ENCODE measurements at regions of chr3 and their contacts with region 1.

Region 1: DNA sequence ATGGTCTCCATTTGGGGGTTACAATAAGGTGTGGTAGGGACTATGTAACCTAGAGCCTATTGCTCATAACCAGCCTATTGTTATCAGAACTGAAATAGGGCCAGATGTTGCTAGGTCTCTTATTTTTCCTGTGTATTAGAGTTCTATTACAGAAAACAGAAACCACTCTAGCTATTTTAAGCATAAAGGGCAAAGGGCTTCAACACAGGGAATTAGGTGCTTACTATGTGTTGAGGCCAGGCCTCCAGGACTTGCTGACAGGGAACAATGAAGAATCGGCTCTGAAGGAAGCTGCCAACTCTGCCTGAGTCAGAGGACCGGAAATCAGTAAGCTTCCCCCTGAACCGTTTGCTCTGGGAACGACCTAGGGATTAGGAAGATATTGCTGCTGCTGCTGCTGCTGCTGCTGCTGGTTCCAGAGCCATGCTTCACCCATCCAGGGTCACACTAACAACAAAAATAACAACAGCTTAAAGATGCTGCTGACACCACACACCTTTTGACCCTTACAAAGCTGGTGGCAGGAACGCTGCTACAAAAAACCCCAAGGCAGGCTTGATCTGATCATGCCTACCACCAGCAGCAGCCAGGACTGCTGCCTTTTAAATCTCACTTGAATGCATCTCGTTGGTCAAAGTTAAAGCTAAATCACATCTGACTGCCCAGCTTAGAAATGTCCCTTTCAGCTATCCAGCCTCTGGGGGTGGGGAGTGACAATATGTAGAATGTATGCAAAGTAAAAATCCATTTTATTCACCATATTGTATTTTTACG is 276.9 kb upstream of the IL12A start:
- DNase-seq: peak; percentile 99
- H3K4me3 ChIP-seq: no peak overlapping the region
- H3K27ac ChIP-seq: peak overlapping the region; percentile 84
- H3K4me1 ChIP-seq: peaks cover 7% of the 10 kb centered on the region
- H3K27me3 ChIP-seq: peaks cover 0 to 3% of the 10 kb centered on the region in 2 experiments
- CTCF ChIP-seq: no peak
- POLR2A ChIP-seq: peak; percentile 65

Region 2: DNA sequence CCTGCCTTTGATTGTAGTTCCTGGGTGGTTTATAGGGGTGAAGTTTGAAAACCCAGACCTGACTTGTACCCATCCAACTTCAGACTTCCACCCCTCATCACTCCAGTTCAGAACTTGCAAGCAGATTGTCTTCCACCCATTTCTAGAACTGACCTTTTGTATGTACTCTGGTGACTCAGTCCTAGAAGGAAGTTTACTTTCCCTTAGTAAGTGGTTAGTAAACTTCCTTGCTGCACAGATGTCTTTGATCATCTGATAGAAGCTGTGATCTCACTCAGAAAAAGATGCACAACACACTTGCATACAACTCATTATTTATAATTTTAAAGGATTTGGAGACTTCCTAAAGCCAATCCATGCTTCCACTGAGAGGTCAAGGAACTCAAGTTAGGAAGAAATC is 541.9 kb before region 1 on chr3:
- CTCF ChIA-PET with region 1: no interaction called
- POLR2A ChIA-PET with region 1: no interaction called
- dilution Hi-C with region 1: no loop called
- intact Hi-C with region 1: loop called (anchors 5 kb)
- DNase-seq: peak; percentile 82
- H3K4me3 ChIP-seq: no peak overlapping the region
- H3K27ac ChIP-seq: peak overlapping the region; percentile 87
- H3K4me1 ChIP-seq: peaks cover 32% of the 10 kb centered on the region
- H3K27me3 ChIP-seq: no peaks in the 10 kb centered on the region
- CTCF ChIP-seq: no peak
- POLR2A ChIP-seq: peak; percentile 71

Region 3: DNA sequence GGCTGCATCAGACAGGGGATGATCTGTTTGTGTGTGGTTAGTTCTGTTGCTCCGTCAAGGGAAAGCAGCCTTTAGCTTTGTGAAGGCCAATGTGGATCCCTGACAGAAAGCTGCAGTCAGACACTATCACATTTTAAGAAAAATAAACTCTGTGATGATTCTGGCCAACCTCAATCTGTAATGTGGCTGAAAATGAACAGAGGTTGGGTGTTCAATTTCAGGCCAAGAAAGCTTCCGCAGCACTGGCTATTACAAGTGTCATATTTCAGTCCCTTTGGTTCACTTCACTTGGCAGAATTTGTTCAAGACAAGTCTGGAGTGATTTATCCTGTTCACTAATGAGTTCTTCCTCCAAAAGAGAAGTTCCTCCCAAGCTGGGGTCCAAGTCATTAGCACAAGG is 294.9 kb before region 1 on chr3:
- CTCF ChIA-PET with region 1: no interaction called
- POLR2A ChIA-PET with region 1: no interaction called
- dilution Hi-C with region 1: no loop called
- intact Hi-C with region 1: no loop called
- DNase-seq: no peak
- H3K4me3 ChIP-seq: no peak overlapping the region
- H3K27ac ChIP-seq: no peak overlapping the region
- H3K4me1 ChIP-seq: no peaks in the 10 kb centered on the region
- H3K27me3 ChIP-seq: no peaks in the 10 kb centered on the region
- CTCF ChIP-seq: no peak
- POLR2A ChIP-seq: no peak

Region 4: DNA sequence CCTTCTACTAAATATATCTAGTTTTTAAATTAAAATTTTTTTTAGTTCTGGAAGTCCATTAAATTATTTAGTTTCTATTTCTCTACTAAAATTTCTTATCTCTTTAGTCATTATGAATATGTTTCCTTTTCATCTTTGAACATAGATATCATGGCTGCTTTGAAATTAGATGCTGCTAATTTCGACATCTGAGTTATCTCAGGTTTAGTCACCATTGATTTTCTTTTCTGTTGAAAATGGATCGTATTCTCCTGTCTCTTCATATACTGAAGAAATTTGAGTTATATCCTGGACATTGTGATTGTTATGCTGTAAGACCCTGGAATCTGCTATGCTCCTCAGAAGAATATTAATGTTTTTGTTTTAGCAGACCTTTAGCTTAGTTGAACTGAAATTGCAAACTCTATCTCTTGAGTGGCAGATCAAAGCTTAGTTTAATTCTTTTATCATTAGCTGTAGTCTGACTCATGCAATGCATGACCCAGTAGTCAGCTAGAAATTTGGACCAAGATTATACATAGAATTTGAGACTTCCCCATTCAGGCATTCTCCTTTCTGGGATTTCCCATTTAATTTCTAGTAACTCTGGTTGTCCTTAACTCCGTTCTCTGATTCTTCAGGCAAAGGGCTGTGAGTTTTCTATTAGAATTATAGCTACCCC is 162.9 kb before region 1 on chr3:
- CTCF ChIA-PET with region 1: no interaction called
- POLR2A ChIA-PET with region 1: no interaction called
- dilution Hi-C with region 1: no loop called
- intact Hi-C with region 1: no loop called
- DNase-seq: no peak
- H3K4me3 ChIP-seq: no peak overlapping the region
- H3K27ac ChIP-seq: no peak overlapping the region
- H3K4me1 ChIP-seq: no peaks in the 10 kb centered on the region
- H3K27me3 ChIP-seq: no peaks in the 10 kb centered on the region
- CTCF ChIP-seq: no peak
- POLR2A ChIP-seq: no peak

Region 5: DNA sequence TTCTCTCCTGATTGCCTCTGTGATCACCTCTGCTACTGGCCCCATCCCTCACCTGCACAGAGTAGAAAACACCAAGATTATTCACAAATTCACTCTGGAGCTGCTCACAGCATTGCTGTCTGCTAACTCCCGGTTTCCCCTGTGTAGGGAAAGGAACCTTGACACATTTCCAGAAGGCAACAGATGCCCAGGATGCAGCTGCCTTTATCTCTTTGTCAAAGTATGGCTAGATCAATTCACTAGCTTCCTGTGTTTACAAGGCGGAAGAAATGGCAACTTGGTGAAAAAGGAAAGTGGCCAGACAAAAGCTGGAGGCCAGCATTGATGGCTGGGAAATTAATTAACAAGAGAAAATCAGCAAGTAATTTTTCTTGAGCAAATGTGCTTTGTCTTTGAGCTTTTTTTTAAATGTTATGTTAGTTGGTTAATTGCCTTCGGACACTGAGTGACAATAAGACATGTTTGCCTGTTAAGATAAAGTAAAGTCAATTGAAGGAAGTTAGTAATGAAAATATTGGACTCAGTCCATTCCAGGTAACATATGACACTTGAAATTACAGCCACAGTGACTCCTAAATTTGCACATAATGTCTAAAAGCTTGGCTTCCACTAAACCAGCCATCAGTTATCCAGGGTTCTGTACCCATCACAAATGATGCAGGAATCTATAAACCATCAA is 117.7 kb before region 1 on chr3:
- CTCF ChIA-PET with region 1: interaction called, 4 read pairs
- POLR2A ChIA-PET with region 1: no interaction called
- dilution Hi-C with region 1: no loop called
- intact Hi-C with region 1: loop called (anchors 2 kb)
- DNase-seq: peak; percentile 89
- H3K4me3 ChIP-seq: no peak overlapping the region
- H3K27ac ChIP-seq: peak overlapping the region; percentile 57
- H3K4me1 ChIP-seq: peaks cover 19% of the 10 kb centered on the region
- H3K27me3 ChIP-seq: peaks cover 3 to 4% of the 10 kb centered on the region in 2 experiments
- CTCF ChIP-seq: no peak
- POLR2A ChIP-seq: no peak

Region 6: GRCh38 chr3:159616212-159616825 is 95.4 kb before region 1 on chr3:
- CTCF ChIA-PET with region 1: interaction called, 6 read pairs
- POLR2A ChIA-PET with region 1: no interaction called
- dilution Hi-C with region 1: no loop called
- intact Hi-C with region 1: loop called (anchors 2 kb)
- DNase-seq: peak; percentile 60
- H3K4me3 ChIP-seq: no peak overlapping the region
- H3K27ac ChIP-seq: no peak overlapping the region
- H3K4me1 ChIP-seq: peaks cover 18% of the 10 kb centered on the region
- H3K27me3 ChIP-seq: no peaks in the 10 kb centered on the region
- CTCF ChIP-seq: peak; percentile 38 to 64
- POLR2A ChIP-seq: no peak

Region 7: DNA sequence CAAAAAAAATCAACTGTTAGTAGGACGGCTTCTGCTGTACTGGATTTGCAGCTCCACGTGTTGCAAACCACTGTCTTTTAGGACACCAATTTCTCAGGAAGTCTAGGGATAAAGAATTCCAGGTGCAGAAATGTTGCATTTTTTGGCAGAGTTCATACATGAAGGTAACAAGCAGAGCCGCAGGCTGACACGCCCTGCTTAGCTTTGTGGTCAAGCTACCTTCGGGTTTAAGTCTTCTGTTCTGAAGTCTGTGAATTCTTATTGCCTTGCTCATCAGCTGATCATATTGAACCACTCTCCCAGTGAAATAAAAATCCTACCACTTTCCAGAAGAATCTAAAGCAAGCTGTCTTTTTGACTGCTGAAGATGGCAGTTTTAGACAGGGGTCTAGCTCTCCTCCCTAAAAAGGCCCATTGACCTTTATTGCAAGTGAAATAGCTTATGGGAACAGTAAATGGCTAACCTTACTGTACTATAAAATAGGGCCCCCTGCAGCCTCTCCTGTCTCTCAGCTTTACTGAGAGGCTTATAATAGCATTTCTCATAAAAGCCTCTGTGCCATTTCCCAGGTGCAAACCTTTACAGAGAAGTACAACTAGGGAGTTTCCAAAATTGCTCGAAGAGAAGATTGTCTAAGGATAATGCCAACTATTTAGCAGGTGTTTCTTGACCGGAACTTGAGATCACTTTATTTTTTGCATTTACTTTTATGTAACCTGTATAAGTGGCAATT is 14.7 kb after region 1 on chr3:
- CTCF ChIA-PET with region 1: interaction called, 26 read pairs
- POLR2A ChIA-PET with region 1: interaction called, 3 read pairs
- dilution Hi-C with region 1: no loop called
- intact Hi-C with region 1: loop called (anchors 1 kb)
- DNase-seq: no peak
- H3K4me3 ChIP-seq: no peak overlapping the region
- H3K27ac ChIP-seq: no peak overlapping the region
- H3K4me1 ChIP-seq: peaks cover 27% of the 10 kb centered on the region
- H3K27me3 ChIP-seq: peaks cover 2 to 5% of the 10 kb centered on the region in 2 experiments
- CTCF ChIP-seq: no peak
- POLR2A ChIP-seq: no peak

Region 8: DNA sequence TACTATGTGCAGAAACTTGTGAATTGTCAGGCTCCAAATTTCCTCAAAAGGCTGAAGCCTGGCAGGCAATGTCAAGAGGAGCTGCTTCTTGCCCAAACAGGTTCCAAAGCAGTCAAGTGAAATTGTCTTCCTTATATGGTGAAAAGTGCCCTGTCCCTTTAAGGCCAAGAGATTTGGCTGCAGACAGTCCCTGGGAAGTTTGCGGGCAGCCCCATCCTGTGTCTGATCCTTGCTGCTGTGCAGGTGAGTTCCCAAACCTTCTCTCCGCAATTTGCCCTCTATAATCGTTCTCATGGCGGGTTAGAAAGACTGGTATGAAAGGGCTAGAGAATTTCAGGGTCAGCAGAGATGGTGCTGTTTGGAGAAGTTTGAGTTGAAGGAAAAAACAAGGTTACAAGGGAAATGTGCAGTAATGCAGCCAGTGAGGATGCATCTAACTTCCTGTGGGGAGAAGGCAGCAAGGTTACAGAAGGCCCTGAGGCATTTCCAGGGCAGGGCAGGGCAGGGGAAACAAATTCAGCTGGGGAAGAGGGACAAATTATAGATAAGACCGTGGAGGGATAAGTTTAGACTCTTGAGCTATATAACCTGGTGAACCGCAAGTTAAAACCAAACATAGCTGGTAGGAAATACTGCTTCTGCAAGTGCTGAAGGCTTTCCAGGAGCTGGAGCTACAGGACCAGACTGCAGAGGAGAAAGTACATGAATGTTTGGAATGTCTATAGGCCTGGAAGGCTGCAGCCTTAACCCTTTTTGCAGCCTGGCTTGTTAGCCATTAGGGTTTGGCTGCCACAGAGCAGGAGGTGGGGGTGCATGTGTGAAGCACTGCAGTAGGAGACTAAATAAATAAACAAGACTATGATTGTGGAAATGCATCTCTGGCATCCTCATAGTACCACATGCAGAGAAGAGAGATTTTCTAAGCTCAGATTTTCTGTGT is 20.7 kb after region 1 on chr3:
- CTCF ChIA-PET with region 1: interaction called, 26 read pairs
- POLR2A ChIA-PET with region 1: interaction called, 3 read pairs
- dilution Hi-C with region 1: no loop called
- intact Hi-C with region 1: loop called (anchors 1 kb)
- DNase-seq: peak; percentile 53
- H3K4me3 ChIP-seq: no peak overlapping the region
- H3K27ac ChIP-seq: no peak overlapping the region
- H3K4me1 ChIP-seq: peaks cover 28% of the 10 kb centered on the region
- H3K27me3 ChIP-seq: no peaks in the 10 kb centered on the region
- CTCF ChIP-seq: no peak
- POLR2A ChIP-seq: no peak

Region 9: DNA sequence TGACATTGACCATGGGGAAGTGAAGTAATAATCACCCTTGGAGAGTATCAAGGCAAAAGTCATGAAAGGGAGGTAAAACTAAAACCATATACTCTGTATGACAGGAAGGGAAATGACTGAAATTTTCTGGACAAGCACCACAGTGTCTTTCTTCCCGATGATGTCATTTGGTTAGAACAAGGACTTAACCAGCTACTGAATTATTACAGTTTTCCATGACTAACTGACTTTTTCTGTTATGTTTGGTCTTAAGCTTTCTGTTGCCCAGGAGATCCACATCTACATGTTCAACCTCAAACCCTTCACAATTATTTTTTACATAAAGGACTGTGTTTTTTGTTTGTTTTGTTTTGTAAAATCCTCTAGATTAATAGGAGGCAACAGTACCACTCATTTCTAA is 85.0 kb after region 1 on chr3:
- CTCF ChIA-PET with region 1: no interaction called
- POLR2A ChIA-PET with region 1: no interaction called
- dilution Hi-C with region 1: no loop called
- intact Hi-C with region 1: loop called (anchors 2 kb)
- DNase-seq: peak; percentile 86
- H3K4me3 ChIP-seq: no peak overlapping the region
- H3K27ac ChIP-seq: peak overlapping the region; percentile 79
- H3K4me1 ChIP-seq: peaks cover 40% of the 10 kb centered on the region
- H3K27me3 ChIP-seq: no peaks in the 10 kb centered on the region
- CTCF ChIP-seq: no peak
- POLR2A ChIP-seq: no peak

Region 10: DNA sequence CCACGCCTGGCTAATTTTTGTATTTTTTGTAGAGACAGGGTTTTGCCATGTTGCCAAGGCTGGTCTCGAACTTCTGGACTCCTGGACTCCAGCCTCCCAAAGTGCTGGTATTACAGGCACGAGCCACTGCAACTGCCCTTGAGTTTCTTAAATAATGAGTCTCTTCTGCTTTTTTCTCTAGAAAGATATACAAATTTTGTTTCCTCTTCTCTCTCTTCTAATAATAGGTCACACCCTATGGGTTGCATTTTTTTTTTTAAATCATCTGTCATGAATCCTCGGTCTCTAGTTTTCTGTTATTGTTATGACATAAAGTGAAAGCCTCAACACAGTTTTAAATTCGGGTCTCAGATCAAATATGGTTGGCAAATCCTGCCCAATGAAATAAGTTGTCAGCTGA is 388.1 kb after region 1 on chr3:
- CTCF ChIA-PET with region 1: no interaction called
- POLR2A ChIA-PET with region 1: no interaction called
- dilution Hi-C with region 1: no loop called
- intact Hi-C with region 1: no loop called
- DNase-seq: no peak
- H3K4me3 ChIP-seq: no peak overlapping the region
- H3K27ac ChIP-seq: no peak overlapping the region
- H3K4me1 ChIP-seq: no peaks in the 10 kb centered on the region
- H3K27me3 ChIP-seq: peaks cover 0 to 4% of the 10 kb centered on the region in 2 experiments
- CTCF ChIP-seq: no peak
- POLR2A ChIP-seq: no peak